ENCODE measurements at regions of chr17 and their contacts with region 1.

Region 1: DNA sequence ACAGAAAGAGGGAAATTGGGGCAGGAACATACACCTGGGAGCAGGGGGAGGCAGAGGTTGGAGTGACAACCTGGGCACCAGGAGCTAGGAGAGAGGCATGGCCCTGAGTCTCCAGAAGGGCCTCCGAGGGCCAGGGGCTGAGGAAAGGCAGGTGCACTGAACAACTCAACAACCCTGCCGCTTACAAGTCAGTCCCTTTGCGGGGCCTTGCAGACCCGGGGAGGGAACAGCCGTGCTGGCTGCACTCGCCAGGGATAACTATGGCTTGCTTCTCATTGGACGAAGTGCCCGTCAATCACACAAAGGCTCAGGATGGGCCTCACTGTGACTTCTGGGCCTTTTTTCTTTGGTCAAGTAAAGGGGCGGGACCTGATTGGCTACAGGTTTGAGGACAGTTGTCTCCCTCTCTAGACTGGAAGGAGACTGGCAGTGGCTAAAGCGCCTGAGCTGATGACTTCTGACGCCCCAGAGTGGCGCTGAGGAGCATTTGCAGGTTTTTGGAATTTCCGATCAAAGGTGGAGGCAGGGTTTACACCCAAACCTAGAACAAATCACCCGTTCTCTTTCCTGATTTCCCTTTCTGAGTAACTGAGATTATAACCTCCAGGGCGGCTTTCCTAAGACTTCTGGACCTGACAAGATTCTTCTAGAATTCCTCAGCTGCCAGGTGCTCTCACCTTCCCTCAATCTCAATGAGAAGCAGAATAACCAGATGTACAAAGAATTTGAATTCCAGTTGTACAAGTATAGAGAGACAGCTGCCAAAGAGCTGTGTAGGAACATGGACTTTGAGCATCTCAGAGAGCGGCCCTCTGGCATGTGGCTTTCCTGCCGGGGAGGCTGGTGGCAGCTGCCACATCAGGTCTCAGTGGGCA is 27.6 kb upstream of the ST6GALNAC2 start:
- DNase-seq: peak; percentile 94 to 95
- H3K4me3 ChIP-seq: no peak overlapping the region
- H3K27ac ChIP-seq: no peak overlapping the region
- H3K4me1 ChIP-seq: peaks cover 28% of the 10 kb centered on the region
- H3K27me3 ChIP-seq: no peaks in the 10 kb centered on the region
- CTCF ChIP-seq: peak; percentile 56

Region 2: DNA sequence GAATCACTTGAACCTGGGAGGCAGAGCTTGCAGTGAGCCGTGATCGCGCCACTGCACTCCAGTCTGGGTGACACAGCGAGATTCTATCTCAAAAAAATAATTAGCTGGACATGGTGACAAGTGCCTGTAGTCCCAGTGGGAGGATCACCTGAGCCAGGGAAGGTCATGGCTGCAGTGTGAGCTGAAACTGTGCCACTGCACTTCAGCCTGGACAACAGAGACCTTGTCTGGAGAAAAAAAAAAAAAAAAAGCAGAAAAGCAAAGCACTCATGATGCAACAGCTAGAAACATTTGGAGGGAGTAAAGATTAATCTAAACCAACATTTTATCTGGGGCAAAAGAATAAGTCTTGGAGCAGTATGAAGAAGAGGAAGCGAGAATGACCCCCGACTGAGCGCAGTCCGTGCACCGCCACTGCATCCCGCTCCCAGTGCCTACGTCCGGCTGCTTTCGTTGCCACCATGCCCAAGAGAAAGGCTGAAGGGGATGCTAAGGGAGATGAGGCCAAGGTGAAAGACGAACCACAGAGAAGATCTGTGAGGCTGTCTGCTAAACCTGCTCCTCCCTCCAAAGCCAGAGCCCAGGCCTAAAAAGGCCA is 267.7 kb before region 1 on chr17:
- CTCF ChIA-PET with region 1: no interaction called
- POLR2A ChIA-PET with region 1: no interaction called
- intact Hi-C with region 1: no loop called
- DNase-seq: no peak
- H3K4me3 ChIP-seq: no peak overlapping the region
- H3K27ac ChIP-seq: peak overlapping the region; percentile 44; the same call in 1 of the 2 replicates
- H3K4me1 ChIP-seq: no peaks in the 10 kb centered on the region
- H3K27me3 ChIP-seq: no peaks in the 10 kb centered on the region
- CTCF ChIP-seq: no peak

Region 3: GRCh38 chr17:76585818-76586593 is 27.2 kb before region 1 on chr17 and contains the start of gene ST6GALNAC2:
- CTCF ChIA-PET with region 1: interaction called, 3 read pairs
- POLR2A ChIA-PET with region 1: no interaction called
- intact Hi-C with region 1: loop called (anchors 1 kb)
- DNase-seq: peak; percentile 59 to 94
- H3K4me3 ChIP-seq: peak within 1 kb of the TSS; percentile 52; the same call in 1 of the 2 replicates
- H3K27ac ChIP-seq: no peak within 1 kb of the TSS
- H3K4me1 ChIP-seq: no peaks in the 10 kb centered on the region
- H3K27me3 ChIP-seq: no peaks in the 10 kb centered on the region
- CTCF ChIP-seq: no peak; the same call in 1 of the 2 replicates
- total RNA-seq, gene ST6GALNAC2: 15.5 and 18.7 TPM in 2 replicates

Region 4: DNA sequence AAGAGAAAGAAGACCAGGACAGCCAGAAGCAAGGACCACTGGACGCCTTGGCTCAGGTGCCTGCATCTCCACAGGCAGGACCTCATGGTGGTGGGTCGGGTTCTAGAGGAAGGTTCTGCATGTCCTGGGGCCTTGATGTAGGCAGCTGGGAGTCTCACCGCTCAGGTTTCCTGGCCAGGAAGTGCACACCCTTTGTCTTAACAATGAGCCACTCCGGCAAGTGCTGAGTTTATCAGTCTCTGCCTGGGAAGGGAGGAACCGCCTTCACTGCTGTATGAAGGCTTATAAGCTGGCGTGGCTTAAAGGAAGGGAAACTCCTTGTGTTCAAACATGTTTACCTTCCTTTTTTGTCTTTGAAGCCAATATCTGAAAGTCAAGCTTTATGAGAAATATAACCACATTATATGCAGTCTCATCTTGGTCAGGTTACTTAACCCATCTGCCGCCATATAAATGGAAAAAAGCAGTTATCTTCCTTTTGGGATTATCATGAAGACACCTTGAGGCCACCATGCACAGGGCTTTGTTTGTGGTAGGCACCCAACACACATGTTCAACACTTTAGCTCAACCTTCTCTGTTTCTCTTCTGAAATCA is 30.4 kb after region 1 on chr17 and contains the start of gene ST6GALNAC1:
- CTCF ChIA-PET with region 1: no interaction called
- POLR2A ChIA-PET with region 1: no interaction called
- intact Hi-C with region 1: no loop called
- DNase-seq: peak in 1 of 2 experiments; percentile 39
- H3K4me3 ChIP-seq: no peak within 1 kb of the TSS
- H3K27ac ChIP-seq: no peak within 1 kb of the TSS
- H3K4me1 ChIP-seq: peaks cover 12% of the 10 kb centered on the region
- H3K27me3 ChIP-seq: no peaks in the 10 kb centered on the region
- CTCF ChIP-seq: no peak
- total RNA-seq, gene ST6GALNAC1: 0.75 and 0.76 TPM in 2 replicates

Region 5: DNA sequence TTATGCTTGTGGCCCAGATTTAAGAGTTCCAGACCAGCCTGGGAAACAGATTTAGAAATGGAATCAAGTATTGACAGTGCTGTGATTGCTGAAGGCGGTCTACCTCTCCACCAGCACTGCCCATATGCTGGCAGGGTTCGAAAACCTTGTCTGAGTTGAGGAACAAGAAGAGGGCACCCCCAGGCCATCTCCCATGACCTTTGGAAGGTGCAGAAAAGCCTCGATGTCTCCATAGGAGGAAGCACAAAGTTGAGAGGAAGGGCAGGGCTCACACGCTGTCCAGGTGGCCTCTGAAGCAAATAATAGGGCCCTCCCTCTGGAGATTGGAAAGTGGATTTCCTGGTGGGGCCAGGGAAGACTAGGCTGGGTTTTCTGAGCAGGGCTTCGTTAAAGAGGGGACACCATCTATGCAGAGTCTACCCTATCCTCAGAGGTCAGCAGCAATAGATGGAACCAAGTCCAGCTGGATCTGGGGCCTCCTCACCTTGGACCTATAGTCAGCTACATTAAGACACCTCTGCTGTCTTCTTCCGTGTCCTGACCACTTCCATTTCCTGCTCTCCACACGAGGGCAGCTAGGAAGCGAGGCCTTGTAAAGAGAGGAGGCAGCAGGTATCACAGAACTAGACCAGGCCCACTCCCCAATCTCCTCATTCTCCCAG is 44.9 kb after region 1 on chr17:
- CTCF ChIA-PET with region 1: no interaction called
- POLR2A ChIA-PET with region 1: no interaction called
- intact Hi-C with region 1: no loop called
- DNase-seq: no peak
- H3K4me3 ChIP-seq: no peak overlapping the region
- H3K27ac ChIP-seq: no peak overlapping the region
- H3K4me1 ChIP-seq: peaks cover 25% of the 10 kb centered on the region
- H3K27me3 ChIP-seq: no peaks in the 10 kb centered on the region
- CTCF ChIP-seq: no peak

Region 6: GRCh38 chr17:76681222-76682137 is 68.3 kb after region 1 on chr17:
- CTCF ChIA-PET with region 1: interaction called, 9 read pairs
- POLR2A ChIA-PET with region 1: no interaction called
- intact Hi-C with region 1: loop called (anchors 1 kb)
- DNase-seq: peak in 1 of 2 experiments; percentile 70
- H3K4me3 ChIP-seq: no peak overlapping the region
- H3K27ac ChIP-seq: no peak overlapping the region
- H3K4me1 ChIP-seq: no peaks in the 10 kb centered on the region
- H3K27me3 ChIP-seq: no peaks in the 10 kb centered on the region
- CTCF ChIP-seq: peak; percentile 77